OCI-LY7 (cell line): ENCODE measurements at regions of chr12 and their contacts with region 1.

Region 1: DNA sequence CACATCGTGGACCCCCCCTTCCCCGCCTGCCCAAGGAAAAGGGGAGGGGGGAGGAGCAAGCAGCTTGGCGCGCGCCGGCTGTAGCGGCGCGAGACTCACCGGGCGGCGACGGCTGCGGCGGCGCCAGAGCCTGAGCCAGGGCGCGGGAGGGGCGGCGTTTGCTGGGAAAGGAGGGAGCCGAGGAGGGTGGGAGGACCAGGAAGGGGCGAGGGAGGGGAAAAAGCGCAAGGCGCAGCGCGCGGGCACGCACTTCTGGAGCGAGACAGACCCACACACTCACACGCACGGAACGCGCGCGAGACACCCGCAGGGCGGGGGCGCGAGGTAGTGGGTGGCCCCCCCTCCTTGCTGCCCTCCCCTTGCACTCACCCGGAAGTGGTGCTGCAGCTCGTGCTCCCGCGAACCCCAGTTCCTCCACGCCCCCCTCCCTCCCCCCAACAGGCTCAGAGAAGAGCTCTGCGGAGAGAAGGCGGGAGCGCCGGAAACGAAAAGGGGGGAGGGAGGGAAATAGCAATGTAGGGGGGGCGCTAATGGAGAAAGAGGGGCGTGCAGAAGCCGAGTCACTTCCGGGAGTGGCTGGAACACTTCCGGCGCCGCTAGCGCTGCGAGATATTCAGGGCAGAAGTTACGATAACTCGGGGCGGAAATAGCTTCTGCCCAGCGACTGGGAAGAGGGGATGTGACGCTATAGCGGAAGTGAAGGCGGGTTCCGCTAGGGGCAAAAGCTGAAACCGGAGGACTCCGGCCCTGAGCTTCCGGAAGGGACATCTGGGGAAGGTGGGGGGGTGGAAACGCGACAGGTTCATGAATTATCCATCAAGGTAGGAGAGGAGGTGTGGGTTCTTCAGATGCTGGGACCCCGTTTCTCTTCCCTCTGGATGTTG is at the start of gene ZNF384:
- DNase-seq: peak; percentile 100
- H3K4me3 ChIP-seq: peak within 1 kb of the TSS; percentile 86
- H3K27ac ChIP-seq: peak within 1 kb of the TSS; percentile 78
- H3K4me1 ChIP-seq: peaks cover 65% of the 10 kb centered on the region
- CTCF ChIP-seq: no peak
- total RNA-seq, gene ZNF384: 48.2 and 48.6 TPM in 2 replicates

Region 2: GRCh38 chr12:6607751-6608591 is 81.3 kb before region 1 on chr12:
- CTCF ChIA-PET with region 1: interaction called, 3 read pairs
- POLR2A ChIA-PET with region 1: interaction called, 4 read pairs
- intact Hi-C with region 1: loop called (anchors 5 kb)
- DNase-seq: peak; percentile 64
- H3K4me3 ChIP-seq: no peak overlapping the region
- H3K27ac ChIP-seq: peak overlapping the region; percentile 57
- H3K4me1 ChIP-seq: peaks cover 56% of the 10 kb centered on the region
- CTCF ChIP-seq: no peak

Region 3: GRCh38 chr12:6632026-6632983 is 56.9 kb before region 1 on chr12:
- CTCF ChIA-PET with region 1: no interaction called
- POLR2A ChIA-PET with region 1: interaction called, 6 read pairs
- intact Hi-C with region 1: loop called (anchors 2 kb)
- DNase-seq: peak; percentile 96
- H3K4me3 ChIP-seq: peak overlapping the region; percentile 68
- H3K27ac ChIP-seq: peak overlapping the region; percentile 97
- H3K4me1 ChIP-seq: peaks cover 87% of the 10 kb centered on the region
- CTCF ChIP-seq: no peak

Region 4: DNA sequence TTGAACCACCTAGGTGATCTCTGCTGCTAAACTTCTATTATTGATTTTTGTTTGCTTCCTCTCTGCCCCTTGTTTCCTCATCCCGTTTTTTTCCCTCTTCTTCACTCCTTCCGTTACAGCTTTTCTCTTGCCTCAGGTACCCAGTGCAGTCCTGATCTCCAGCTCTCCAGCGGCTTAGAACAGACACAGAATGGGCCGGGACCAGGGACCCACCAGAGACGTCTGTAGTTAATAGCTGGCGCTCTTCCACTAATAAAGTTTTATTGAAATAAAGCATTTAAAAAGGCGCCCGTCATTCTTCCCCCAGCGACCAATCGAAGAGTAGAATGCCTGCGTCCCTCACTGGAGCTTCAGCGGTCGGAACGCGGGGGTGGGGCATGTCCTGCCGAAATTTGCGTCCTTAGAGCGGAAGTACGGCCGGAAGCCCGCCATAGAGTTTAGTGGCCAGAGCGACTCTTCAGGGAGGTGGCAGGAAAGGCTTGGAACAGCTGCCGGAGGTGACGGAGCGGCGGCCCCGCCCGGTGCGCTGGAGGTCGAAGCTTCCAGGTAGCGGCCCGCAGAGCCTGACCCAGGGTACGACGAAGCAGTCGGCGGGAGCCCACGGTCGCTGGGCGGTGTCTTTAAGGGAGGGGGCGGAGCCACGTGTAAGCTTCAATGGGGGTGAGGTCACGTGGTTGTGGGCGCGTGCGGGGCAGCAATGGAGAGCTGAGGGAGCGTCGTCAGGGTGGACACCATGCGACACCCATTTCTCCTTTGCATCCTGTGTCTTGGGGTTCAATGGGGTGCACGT is 34.6 kb after region 1 on chr12 and contains the start of gene COPS7A:
- CTCF ChIA-PET with region 1: interaction called, 3 read pairs
- POLR2A ChIA-PET with region 1: interaction called, 12 read pairs
- intact Hi-C with region 1: loop called (anchors 1 kb)
- DNase-seq: peak; percentile 100
- H3K4me3 ChIP-seq: peak within 1 kb of the TSS; percentile 76
- H3K27ac ChIP-seq: peak within 1 kb of the TSS; percentile 77
- H3K4me1 ChIP-seq: peaks cover 52% of the 10 kb centered on the region
- CTCF ChIP-seq: peak; percentile 25; the same call in 1 of the 2 replicates
- total RNA-seq, gene COPS7A: 64.8 and 71.2 TPM in 2 replicates

Region 5: DNA sequence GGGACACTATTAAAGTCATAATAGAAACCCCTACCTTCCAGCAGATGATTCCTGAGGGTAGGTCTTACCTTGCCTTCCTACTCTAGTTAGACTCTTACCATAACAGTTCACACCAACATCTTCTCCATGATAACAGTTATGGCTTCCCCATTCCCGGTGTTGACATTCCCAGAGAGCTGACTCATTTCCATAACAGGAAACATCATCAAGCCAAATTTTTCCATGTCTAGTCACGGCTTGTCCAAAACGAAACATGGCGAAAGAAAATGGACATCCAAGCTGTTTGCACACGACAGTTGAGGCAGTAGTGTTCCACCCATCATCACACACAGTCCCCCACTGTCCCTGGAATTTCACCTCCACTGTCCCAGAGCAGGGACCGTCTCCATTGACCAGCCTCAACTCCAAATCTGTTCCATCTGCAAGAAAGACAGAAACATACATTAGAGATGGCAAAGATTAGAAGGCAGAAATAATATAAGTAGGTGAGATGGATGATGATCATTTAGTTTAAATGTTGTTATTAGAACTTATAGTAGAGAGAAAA is 744.1 kb after region 1 on chr12:
- CTCF ChIA-PET with region 1: interaction called, 18 read pairs
- POLR2A ChIA-PET with region 1: no interaction called
- intact Hi-C with region 1: no loop called
- DNase-seq: no peak
- H3K4me3 ChIP-seq: no peak overlapping the region
- H3K27ac ChIP-seq: no peak overlapping the region
- H3K4me1 ChIP-seq: no peaks in the 10 kb centered on the region
- CTCF ChIP-seq: no peak